ENCODE measurements at regions of chr16 and their contacts with region 1.

Region 1: DNA sequence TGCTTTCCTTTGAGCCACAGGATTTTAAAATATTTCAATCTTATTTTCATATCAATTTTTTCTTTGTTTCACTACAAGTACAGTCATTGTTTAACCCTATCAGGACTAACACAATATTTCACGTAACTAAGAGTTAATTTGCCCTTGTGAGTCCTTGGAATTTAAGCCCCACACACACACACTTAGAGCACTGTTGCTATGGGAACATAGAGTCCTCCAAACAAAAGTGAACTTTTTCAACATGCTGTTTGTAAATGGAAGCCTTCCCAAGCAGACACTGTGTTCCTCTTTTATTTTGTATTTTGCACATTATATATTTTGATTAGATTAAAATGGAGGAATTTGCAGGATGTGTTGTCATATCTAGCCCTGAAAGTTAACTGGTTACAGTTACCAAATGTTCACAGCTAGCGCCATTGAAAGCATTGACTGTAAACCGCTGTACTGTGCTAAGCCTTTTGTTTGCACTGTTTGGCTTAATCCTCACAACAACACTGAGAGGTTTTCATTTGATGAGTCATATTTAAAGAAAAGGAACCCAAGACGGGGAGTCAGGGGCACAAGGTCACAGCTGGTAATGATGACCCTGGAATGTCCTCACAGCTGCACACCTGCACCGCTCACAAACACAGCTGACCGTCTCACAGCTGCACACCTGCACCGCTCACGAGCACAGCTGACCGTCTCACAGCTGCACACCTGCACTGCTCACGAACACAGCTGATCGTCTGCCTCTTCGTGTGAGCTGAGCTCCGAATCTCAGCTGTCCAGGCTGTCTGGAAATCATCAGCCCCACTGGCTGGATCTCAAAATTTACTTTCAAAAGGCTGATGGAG is 6.3 kb downstream of the HSBP1 start:
- DNase-seq: peak in 3 of 5 donors; percentile 31 to 79 (median 78)
- H3K4me3 ChIP-seq: no peak overlapping the region
- H3K27ac ChIP-seq: no peak overlapping the region
- H3K4me1 ChIP-seq: peaks cover 0 to 9% (median 5%) of the 10 kb centered on the region in 3 donors
- H3K27me3 ChIP-seq: no peaks in the 10 kb centered on the region
- CTCF ChIP-seq: no peak

Region 2: GRCh38 chr16:83689385-83689831 is 124.6 kb before region 1 on chr16:
- intact Hi-C with region 1: loop called (anchors 5 kb)
- DNase-seq: peak in 1 of 5 donors; percentile 9
- H3K4me3 ChIP-seq: no peak overlapping the region
- H3K27ac ChIP-seq: no peak overlapping the region
- H3K4me1 ChIP-seq: no peaks in the 10 kb centered on the region
- H3K27me3 ChIP-seq: no peaks in the 10 kb centered on the region
- CTCF ChIP-seq: no peak

Region 3: GRCh38 chr16:84065536-84066132 is 251.6 kb after region 1 on chr16:
- intact Hi-C with region 1: no loop called
- DNase-seq: peak in 3 of 5 donors; percentile 58 to 77 (median 63)
- H3K4me3 ChIP-seq: no peak overlapping the region
- H3K27ac ChIP-seq: no peak overlapping the region
- H3K4me1 ChIP-seq: no peaks in the 10 kb centered on the region
- H3K27me3 ChIP-seq: no peaks in the 10 kb centered on the region
- CTCF ChIP-seq: peak; percentile 65